ENCODE measurements at regions of chr13 and their contacts with region 1.

Region 1: DNA sequence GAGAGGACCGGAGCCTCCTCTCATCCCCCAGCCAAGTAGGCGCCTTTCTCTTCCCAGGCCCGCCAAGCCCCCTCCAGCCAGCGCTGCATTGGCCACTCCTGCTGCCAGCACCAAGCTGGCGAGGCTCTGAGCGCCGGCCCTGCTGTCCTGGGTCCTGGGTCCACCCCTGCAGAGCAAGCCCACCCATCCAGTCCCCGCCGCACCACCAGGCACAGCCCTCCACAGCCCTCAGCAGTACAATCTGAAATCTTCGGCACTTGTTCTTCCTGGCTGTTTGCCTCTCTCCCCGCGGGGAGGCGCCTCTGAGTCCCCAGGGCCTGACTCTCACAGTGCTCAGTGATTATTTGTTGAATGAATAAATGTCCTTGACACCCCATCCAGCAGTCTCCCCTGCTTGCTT is 236.4 kb upstream of the SGCG start:
- DNase-seq: no peak
- ATAC-seq: no peak
- H3K4me3 ChIP-seq: no peak overlapping the region
- H3K27ac ChIP-seq: no peak overlapping the region
- H3K4me1 ChIP-seq: no peaks in the 10 kb centered on the region
- H3K27me3 ChIP-seq: no peaks in the 10 kb centered on the region
- CTCF ChIP-seq: no peak
- EP300 ChIP-seq: no peak
- POLR2A ChIP-seq: no peak
- RAD21 ChIP-seq: no peak

Region 2: DNA sequence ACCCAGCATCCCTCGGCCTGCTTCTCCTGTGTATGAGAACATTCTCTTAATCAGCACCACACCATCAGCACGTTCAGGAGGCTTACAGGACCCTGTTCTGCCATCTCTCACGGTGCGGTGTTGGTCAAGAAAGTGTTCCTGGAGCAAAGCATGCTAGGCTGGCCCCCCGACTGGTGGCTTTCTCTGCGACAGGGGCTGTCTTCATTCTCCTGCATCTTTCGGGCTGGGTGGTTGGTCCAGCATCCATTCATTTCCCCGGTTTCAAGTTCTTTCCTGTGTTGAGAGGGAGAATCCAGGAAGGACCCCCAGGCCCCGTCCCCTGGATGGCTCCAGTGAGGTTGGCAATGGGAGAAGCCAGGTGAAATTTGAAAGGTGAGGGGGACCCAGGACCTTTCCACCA is 1420.8 kb after region 1 on chr13:
- CTCF ChIA-PET with region 1: no interaction called
- POLR2A ChIA-PET with region 1: no interaction called
- RAD21 ChIA-PET with region 1: no interaction called
- SMC1A ChIA-PET with region 1: no interaction called
- in situ Hi-C with region 1: loop called (anchors 5 kb)
- intact Hi-C with region 1: no loop called
- DNase-seq: no peak
- ATAC-seq: no peak
- H3K4me3 ChIP-seq: no peak overlapping the region
- H3K27ac ChIP-seq: no peak overlapping the region
- H3K4me1 ChIP-seq: no peaks in the 10 kb centered on the region
- H3K27me3 ChIP-seq: no peaks in the 10 kb centered on the region
- CTCF ChIP-seq: no peak
- EP300 ChIP-seq: no peak
- POLR2A ChIP-seq: no peak
- RAD21 ChIP-seq: no peak

Measured in GM12878 (cell line).